ENCODE measurements at regions of chr1 and their contacts with region 1.

Region 1: DNA sequence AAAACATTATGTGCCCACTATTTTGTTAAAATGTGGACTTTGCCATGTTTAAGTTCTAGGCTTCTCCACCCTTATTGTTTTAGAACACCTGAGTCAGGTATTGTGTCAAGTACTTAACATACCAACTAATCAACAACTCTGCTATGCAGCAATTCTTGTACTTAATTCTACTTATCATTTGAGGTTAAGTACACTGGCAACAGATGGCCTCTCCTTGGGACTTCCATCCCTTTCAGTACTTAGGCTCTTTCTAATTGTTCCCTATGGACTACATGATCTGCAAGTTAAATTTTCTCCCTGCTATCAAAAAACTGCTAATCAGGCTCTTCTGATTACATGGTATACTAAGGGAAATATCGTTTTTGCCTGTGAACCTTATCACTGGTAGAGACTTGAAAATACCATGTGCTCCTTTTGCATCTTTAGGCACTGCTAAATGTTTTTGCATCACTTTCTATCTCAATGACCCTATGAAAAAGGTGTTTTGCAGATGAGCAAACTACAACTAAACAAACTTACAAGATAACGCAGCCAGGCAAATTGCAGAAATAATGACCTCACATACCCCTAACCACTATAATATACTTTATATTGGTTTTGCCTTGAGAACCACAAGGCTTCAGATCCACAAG is 18.9 kb downstream of the SFPQ start:
- DNase-seq: no peak
- ATAC-seq: no peak
- H3K4me3 ChIP-seq: no peak overlapping the region
- H3K27ac ChIP-seq: no peak overlapping the region
- H3K4me1 ChIP-seq: peaks cover 0 to 12% (median 5%) of the 10 kb centered on the region in 12 donors
- H3K27me3 ChIP-seq: no peaks in the 10 kb centered on the region
- CTCF ChIP-seq: no peak
- POLR2A ChIP-seq: no peak

Region 2: DNA sequence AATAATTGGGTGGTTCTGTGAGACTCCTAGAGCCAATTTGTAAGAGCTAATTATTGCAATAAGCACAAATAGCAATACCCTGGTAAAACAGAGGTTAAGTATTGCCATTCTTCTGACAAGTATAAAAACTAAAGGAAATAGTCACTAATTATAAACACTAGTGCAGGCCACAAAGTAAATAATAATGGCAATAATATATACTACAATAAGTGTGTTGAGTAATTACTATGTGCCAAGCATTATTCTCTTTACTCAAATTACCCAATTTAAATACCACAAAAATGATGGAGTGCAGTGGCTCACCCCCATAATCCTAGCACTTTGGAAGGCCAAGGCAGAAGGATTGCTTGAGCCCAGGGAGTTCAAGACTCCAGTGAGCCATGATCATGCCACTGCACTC is 157.6 kb before region 1 on chr1:
- intact Hi-C with region 1: loop called in 1 of 10 experiments (anchors 10 kb)
- DNase-seq: no peak
- ATAC-seq: no peak
- H3K4me3 ChIP-seq: no peak overlapping the region
- H3K27ac ChIP-seq: no peak overlapping the region
- H3K4me1 ChIP-seq: no peaks in the 10 kb centered on the region
- H3K27me3 ChIP-seq: no peaks in the 10 kb centered on the region
- CTCF ChIP-seq: no peak
- POLR2A ChIP-seq: no peak

Region 3: GRCh38 chr1:35390600-35391494 is 216.8 kb after region 1 on chr1:
- intact Hi-C with region 1: loop called in 1 of 10 experiments (anchors 10 kb)
- DNase-seq: no peak
- ATAC-seq: no peak
- H3K4me3 ChIP-seq: no peak overlapping the region
- H3K27ac ChIP-seq: no peak overlapping the region
- H3K4me1 ChIP-seq: no peaks in the 10 kb centered on the region
- H3K27me3 ChIP-seq: no peaks in the 10 kb centered on the region
- CTCF ChIP-seq: no peak
- POLR2A ChIP-seq: no peak